ENCODE measurements at regions of chrX and their contacts with region 1.

Region 1: DNA sequence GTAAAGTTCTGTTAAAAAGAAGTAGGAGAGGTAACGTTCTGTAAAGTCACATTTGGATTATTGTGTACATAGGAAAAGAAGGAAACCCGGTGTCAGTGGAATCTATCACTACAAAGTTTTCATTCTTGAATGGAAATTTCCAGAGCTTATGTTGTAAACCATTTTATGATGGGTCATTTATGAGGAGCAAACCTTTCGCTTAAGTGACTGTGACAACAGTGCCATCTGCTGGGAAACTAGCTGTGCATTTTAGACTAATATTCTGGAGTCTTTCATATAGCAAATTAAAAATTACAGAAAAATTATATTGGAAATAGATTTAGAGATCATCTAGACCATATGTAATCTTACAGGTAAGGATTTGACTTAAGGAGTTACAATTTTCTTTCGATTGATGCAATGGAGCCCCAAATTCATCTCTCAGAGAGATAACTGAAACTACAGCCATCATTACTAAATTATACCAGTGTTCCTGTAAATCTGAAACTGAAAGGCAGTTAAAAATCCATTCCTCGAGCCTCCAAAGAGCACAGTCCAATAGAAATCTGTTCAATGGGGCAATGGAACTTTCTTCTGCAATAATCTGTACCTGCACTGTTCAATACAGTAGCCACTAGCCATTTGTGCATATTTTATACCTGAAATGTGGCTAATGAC is 26.9 kb downstream of the ASB9 start:
- DNase-seq: no peak

Region 2: DNA sequence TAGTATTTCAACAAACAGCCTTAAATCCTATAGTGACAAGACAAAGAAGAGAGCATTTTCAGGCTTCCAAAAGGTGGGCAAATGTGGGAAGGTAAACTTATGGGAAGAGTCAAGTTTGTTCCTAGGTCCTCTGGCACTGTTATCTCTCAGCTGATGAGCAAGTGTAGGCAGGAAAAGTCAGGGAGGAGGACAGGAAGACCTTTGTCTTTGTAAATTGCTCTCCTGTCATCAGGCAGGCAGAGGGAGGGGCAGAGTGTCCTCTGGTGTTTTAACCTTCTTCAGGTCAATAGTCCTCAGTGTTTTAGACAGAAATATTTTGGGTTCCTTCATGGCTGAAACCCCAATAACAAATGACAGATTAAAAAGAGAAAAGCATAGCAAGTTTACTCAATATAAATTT is 1199.8 kb before region 1 on chrX:
- intact Hi-C with region 1: loop called in 1 of 2 experiments (anchors 5 kb)
- DNase-seq: no peak